Activated T-helper 1 cell treated with anti-CD3 and anti-CD28 coated beads, Interleukin-12 subunit alpha, Interleukin-12 subunit beta, Interleukin-2, Interleukin-4 antibody, amounts not matched to agents 30 ng/mL and 10 ng/mL and 1 ng/mL, durations not matched to agents 14 hours and 24 hours and 36 hours (primary cell): ENCODE measurements at regions of chr21 and their contacts with region 1.

Region 1: DNA sequence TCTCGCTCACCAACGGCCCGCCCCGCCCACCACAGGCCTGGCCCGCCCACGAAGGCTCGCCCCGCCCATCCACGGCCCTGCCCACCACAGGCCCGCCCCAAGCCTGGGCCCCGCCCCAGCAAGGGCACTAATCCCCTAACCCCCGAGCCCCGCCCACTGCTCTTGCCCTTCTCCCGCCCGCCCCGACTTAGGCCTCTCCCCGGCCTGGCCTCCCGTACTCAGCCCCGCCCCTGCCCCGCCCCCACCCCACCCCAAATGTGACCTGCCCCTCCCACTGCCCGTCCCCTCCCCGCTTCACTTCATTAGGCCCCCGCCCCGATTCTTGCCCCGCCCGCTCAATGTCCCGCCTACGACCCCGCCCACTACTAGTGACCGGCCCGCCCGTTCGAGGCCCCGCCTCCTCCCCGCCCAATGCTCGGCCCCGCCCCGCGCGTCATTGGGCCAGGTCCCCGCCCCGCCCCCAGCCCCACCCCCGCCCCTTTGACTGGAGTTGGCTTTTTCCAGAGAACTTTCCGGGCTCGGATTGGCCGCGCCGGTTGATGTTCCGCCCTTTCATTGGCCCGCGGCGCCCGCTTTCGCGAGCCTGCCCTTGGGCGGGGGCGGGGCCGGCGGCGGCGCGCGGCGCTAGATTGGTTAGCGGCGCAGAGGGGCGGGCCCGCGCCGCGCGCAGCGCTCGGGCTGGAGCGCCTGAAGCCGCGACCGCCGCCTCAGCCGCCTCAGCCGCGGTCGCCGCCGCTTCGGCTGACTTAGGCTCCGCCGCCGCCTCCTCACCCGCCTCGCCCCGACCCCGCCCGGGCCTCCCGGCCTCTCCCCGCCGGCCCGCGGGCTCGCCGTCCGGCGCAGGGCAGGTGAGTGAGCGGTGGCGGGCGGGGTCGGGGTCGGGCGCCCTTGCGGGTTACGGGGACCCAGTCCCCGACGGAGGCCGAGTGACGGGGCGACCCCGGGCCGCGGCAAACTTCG is at the start of gene PCBP3:
- DNase-seq: peak; percentile 94
- H3K4me3 Mint-ChIP-seq: peak within 1 kb of the TSS; percentile 83
- H3K27ac Mint-ChIP-seq: peak within 1 kb of the TSS; percentile 63
- H3K4me1 Mint-ChIP-seq: peaks cover 15% of the 10 kb centered on the region
- H3K27me3 Mint-ChIP-seq: peaks cover 10% of the 10 kb centered on the region
- total RNA-seq, gene PCBP3: 8.2 and 10.7 TPM in 2 replicates

Region 2: GRCh38 chr21:44338971-44339910 is 1304.1 kb before region 1 on chr21 and contains the start of gene CFAP410:
- intact Hi-C with region 1: loop called (anchors 2 kb)
- DNase-seq: peak; percentile 94
- H3K4me3 Mint-ChIP-seq: peak within 1 kb of the TSS; percentile 94
- H3K27ac Mint-ChIP-seq: peak within 1 kb of the TSS; percentile 94
- H3K4me1 Mint-ChIP-seq: peaks cover 25% of the 10 kb centered on the region
- H3K27me3 Mint-ChIP-seq: no peaks in the 10 kb centered on the region
- total RNA-seq, gene CFAP410: 13.3 and 17.8 TPM in 2 replicates

Region 3: GRCh38 chr21:45287438-45288391 is 355.6 kb before region 1 on chr21 and contains the start of gene POFUT2:
- intact Hi-C with region 1: loop called (anchors 1 kb)
- DNase-seq: peak; percentile 97
- H3K4me3 Mint-ChIP-seq: peak within 1 kb of the TSS; percentile 84
- H3K27ac Mint-ChIP-seq: peak within 1 kb of the TSS; percentile 86
- H3K4me1 Mint-ChIP-seq: peaks cover 16% of the 10 kb centered on the region
- H3K27me3 Mint-ChIP-seq: peaks cover 12% of the 10 kb centered on the region
- total RNA-seq, gene POFUT2: 14.3 and 17.6 TPM in 2 replicates

Region 4: GRCh38 chr21:45336870-45337269 is 306.4 kb before region 1 on chr21:
- intact Hi-C with region 1: no loop called
- DNase-seq: no peak
- H3K4me3 Mint-ChIP-seq: no peak overlapping the region
- H3K27ac Mint-ChIP-seq: no peak overlapping the region
- H3K4me1 Mint-ChIP-seq: no peaks in the 10 kb centered on the region
- H3K27me3 Mint-ChIP-seq: no peaks in the 10 kb centered on the region

Region 5: DNA sequence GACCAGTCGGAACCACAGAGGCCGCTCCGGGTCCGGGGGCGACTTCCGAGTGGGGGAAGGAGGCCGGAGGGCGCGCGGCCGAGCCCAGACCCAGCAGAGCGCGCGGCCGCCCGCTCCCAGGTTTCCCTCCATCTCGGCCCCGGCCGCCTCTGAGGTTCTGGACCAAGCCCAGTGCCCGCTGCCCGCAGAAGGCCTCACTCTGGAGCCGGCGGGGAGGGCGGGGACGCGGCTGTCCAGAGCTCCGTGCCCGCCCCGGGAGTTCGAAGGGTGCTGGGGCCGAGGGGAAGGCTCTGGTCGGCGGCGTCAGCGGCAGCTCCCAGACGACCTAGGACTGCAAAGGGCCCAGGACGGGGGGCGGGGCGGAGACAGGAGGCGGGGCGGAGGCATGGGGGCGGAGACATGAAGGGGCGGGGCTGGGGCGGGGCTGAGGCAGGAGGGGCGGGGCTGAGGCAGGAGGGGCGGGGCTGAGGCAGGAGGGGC is 53.0 kb before region 1 on chr21:
- intact Hi-C with region 1: loop called (anchors 1 kb)
- DNase-seq: peak; percentile 69
- H3K4me3 Mint-ChIP-seq: no peak overlapping the region
- H3K27ac Mint-ChIP-seq: no peak overlapping the region
- H3K4me1 Mint-ChIP-seq: no peaks in the 10 kb centered on the region
- H3K27me3 Mint-ChIP-seq: peaks cover 4% of the 10 kb centered on the region

Region 6: DNA sequence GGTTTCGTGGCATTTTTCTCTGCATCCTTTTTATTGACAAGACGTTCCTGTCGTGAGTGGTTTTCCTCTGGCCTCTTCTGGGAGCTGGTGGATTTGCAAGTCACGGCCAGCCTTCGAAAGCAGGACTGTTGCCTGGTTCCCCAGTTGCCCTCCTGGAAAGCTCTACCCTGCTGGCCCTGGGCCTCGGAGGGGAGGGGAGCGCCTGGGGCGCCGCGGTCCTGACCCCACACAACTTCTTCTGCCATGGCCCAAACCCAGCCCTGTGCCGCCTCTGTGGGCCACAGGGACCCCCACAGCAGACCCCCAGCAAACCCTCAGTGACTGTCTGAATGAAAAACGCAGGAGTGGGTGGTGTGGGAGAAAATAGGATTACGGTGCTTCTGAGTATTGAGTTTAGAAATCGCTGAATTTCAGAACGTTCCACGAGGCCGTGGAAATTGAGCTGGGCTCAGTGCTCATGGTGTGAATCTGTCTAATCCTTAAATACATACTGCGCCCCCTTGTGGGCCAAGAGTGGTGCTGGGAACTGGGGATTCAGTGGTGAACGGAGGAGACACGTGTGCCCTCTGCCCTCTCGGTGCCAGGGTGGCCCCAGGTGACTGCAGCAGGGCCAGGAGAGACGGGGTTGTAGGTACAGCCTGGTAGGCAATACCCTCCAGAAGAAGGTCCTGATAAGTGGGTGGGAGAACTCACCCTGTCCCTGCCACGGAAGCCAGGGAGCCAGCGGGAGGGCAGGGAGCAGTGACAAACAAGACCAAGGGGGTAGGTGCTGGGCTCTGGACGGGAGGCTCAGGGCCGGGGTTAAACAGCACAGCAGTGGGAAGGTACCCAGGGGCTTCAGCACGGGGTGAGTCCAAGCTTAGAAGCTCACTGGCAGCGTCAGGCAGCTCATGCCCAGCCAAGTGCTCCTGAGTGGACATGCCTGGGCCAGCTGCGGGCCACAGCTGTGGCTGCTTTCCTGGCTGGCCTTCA is 237.1 kb after region 1 on chr21:
- intact Hi-C with region 1: loop called (anchors 10 kb)
- DNase-seq: peak; percentile 51
- H3K4me3 Mint-ChIP-seq: no peak overlapping the region
- H3K27ac Mint-ChIP-seq: no peak overlapping the region
- H3K4me1 Mint-ChIP-seq: peaks cover 18% of the 10 kb centered on the region
- H3K27me3 Mint-ChIP-seq: peaks cover 12% of the 10 kb centered on the region